ENCODE measurements at regions of chr6 and their contacts with region 1.

Region 1: GRCh38 chr6:144095331-144096002 is at the start of gene SF3B5:
- DNase-seq: peak; percentile 99
- H3K4me3 Mint-ChIP-seq: peak within 1 kb of the TSS; percentile 93
- H3K27ac Mint-ChIP-seq: peak within 1 kb of the TSS; percentile 96
- H3K4me1 Mint-ChIP-seq: peaks cover 25% of the 10 kb centered on the region
- H3K27me3 Mint-ChIP-seq: no peaks in the 10 kb centered on the region
- total RNA-seq, gene SF3B5: 162 to 171 TPM

Region 2: DNA sequence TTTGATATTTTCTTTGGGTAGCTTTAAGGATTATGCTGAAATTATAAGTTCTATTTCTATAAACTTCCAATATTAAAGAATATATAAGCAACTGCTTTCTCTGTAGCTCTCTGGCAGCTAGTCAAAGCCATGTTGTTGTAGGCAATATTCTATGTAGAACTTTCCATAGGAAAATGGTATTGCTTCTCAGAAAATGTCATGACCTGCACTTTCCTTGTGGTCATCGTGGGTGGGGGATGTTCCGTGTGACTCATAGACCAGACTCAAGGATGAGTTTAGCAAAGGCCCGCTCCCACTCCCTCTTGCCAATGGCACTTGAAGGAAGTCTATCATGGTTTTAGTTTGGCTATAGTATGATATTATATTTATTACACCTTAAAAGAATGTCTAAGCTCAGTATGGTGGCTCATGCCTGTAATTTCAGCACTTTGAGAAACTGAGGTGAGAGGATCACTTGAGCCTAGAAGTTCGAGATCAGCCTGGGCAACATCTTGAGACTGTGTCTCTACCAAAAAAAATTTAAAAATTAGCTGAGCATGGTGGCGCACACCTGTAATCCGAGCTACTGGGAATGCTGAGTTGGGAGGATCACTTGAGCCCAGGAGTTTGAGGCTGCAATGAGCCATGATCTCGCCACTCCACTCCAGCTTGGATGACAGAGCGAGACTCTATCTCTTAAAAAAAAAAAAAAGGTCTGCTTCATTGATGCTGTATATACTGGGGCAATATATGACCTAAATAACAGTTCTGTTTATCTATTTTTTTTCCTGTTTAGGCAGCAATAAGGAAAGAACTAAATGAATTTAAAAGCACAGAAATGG is 289.0 kb before region 1 on chr6:
- CTCF ChIA-PET with region 1: no interaction called
- POLR2A ChIA-PET with region 1: no interaction called
- intact Hi-C with region 1: no loop called
- DNase-seq: peak; percentile 93
- H3K4me3 Mint-ChIP-seq: peak overlapping the region; percentile 23
- H3K27ac Mint-ChIP-seq: peak overlapping the region; percentile 80
- H3K4me1 Mint-ChIP-seq: peaks cover 49% of the 10 kb centered on the region
- H3K27me3 Mint-ChIP-seq: no peaks in the 10 kb centered on the region

Region 3: GRCh38 chr6:143842902-143843676 is 252.4 kb before region 1 on chr6 and contains the start of gene LTV1:
- CTCF ChIA-PET with region 1: no interaction called
- POLR2A ChIA-PET with region 1: interaction called, 5 read pairs
- intact Hi-C with region 1: loop called (anchors 1 kb)
- DNase-seq: peak; percentile 96
- H3K4me3 Mint-ChIP-seq: peak within 1 kb of the TSS; percentile 93
- H3K27ac Mint-ChIP-seq: peak within 1 kb of the TSS; percentile 93
- H3K4me1 Mint-ChIP-seq: peaks cover 25% of the 10 kb centered on the region
- H3K27me3 Mint-ChIP-seq: no peaks in the 10 kb centered on the region
- total RNA-seq, gene LTV1: 33.5 to 35.4 TPM

Region 4: GRCh38 chr6:144055121-144055931 is 40.1 kb before region 1 on chr6:
- CTCF ChIA-PET with region 1: no interaction called
- POLR2A ChIA-PET with region 1: interaction called, 11 read pairs
- intact Hi-C with region 1: loop called (anchors 1 kb)
- DNase-seq: peak; percentile 68
- H3K4me3 Mint-ChIP-seq: peak overlapping the region; percentile 69
- H3K27ac Mint-ChIP-seq: peak overlapping the region; percentile 90
- H3K4me1 Mint-ChIP-seq: peaks cover 27% of the 10 kb centered on the region
- H3K27me3 Mint-ChIP-seq: no peaks in the 10 kb centered on the region

Region 5: DNA sequence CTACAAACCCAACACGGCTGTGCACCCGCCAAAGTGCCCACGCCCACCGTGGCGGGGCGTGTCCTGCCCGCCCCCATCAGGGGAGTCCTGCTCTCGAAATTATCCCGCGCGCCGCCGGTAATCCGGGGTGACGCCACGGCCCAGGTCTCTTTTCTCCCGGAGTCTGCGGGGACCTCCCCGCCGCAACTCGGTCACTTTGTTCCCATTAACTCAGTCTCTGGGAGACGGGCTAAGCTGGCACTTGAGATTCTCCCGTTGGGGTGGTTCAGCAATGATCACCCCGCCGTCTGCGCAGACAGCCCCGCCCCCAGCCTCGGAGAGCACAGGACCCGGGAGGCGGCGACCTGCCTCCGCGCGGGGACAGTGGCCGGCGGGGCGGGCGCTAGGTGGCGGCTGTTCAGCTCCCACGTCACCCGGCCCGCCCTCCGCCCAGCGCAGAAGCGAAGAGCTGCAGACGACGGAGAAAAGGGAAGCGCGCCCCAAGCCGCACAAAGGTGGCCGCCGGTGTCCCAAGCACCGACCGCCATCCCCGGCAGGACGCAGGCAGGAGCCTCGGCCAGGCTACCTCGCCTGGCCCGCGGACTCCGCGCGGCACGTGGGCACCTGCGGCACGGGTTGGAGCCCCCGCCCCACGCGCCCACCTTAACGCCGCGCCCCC is 31.6 kb before region 1 on chr6:
- CTCF ChIA-PET with region 1: interaction called, 3 read pairs
- POLR2A ChIA-PET with region 1: interaction called, 14 read pairs
- intact Hi-C with region 1: loop called (anchors 1 kb)
- DNase-seq: peak; percentile 91
- H3K4me3 Mint-ChIP-seq: peak overlapping the region; percentile 82
- H3K27ac Mint-ChIP-seq: peak overlapping the region; percentile 67
- H3K4me1 Mint-ChIP-seq: peaks cover 43% of the 10 kb centered on the region
- H3K27me3 Mint-ChIP-seq: no peaks in the 10 kb centered on the region

Region 6: DNA sequence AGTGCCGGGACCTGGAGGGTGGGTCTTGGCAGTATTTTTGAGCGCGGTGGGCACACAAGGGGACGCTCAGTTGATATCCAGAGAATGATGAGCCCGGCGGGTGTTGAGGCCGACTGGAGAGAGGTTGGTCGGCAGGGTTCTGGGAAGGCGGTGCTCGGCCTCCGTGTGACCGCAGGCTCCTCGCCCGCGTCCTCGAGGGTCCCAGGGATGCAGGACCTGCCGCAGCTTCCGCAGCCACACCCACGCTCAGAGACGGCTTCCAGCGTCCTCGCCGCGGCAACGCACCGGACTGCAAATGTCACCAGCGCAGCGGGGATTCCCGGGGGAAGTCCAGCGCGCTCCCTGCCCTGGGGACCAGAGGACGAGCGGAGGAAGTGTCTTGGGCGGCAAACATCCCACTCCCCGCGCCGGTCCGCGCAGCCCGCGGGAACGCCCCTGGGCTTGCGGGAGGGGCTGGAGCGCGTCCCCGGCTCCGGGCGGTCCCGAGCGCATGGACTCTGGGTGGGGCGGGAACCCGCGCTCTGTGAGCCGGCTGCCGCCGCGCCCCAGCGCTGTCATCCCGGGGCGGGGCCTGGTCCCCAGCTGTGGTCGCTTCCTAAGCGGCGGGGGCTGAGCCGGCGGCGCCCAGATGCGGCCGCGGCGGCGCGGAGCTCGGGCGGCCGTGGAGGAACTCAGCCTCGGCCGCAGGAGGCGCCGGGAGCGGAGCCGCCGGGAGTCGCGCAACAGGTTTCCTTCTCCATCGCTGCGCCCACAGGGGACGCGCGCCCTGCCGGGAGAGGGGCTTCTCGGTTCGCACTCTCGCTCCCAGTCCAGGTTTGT is 54.6 kb after region 1 on chr6 and contains the start of gene STX11:
- CTCF ChIA-PET with region 1: no interaction called
- POLR2A ChIA-PET with region 1: no interaction called
- intact Hi-C with region 1: loop called (anchors 1 kb)
- DNase-seq: peak; percentile 88
- H3K4me3 Mint-ChIP-seq: peak within 1 kb of the TSS; percentile 88
- H3K27ac Mint-ChIP-seq: peak within 1 kb of the TSS; percentile 98
- H3K4me1 Mint-ChIP-seq: peaks cover 41% of the 10 kb centered on the region
- H3K27me3 Mint-ChIP-seq: no peaks in the 10 kb centered on the region
- total RNA-seq, gene STX11: 16.0 to 16.6 TPM

Region 7: DNA sequence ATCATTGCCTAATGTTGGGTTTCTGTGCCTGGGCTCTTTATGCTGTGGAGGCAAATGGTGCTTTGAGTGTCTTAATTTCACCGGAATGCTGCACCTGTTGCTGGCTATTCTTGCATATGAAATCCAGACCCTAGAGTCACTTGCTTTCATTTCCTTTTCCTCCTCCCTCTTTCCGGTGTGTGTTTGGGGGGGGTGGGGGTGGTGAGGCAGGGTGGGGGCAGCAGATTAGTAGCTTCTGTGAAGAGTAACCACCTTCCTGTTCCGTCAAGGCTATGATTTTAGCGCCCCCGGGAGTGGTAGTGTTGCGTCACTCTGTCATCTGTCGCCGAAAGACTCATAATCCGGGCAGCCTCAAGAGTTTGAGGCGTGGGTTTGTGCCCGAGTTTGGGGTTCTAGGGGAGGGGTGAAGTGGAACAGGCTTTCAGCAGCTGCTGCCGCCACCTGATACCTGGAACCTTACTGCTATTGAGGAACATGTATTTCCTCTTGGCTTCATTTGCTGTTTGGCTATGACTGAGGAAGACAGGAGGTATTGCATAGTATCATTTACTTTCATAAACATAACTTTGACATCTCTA is 238.8 kb after region 1 on chr6:
- CTCF ChIA-PET with region 1: no interaction called
- POLR2A ChIA-PET with region 1: no interaction called
- intact Hi-C with region 1: loop called (anchors 2 kb)
- DNase-seq: peak; percentile 84
- H3K4me3 Mint-ChIP-seq: peak overlapping the region; percentile 67
- H3K27ac Mint-ChIP-seq: peak overlapping the region; percentile 67
- H3K4me1 Mint-ChIP-seq: peaks cover 40% of the 10 kb centered on the region
- H3K27me3 Mint-ChIP-seq: no peaks in the 10 kb centered on the region

Region 8: GRCh38 chr6:144469144-144469575 is 373.7 kb after region 1 on chr6:
- CTCF ChIA-PET with region 1: no interaction called
- POLR2A ChIA-PET with region 1: no interaction called
- intact Hi-C with region 1: loop called (anchors 5 kb)
- DNase-seq: peak; percentile 46
- H3K4me3 Mint-ChIP-seq: peak overlapping the region; percentile 59
- H3K27ac Mint-ChIP-seq: peak overlapping the region; percentile 49
- H3K4me1 Mint-ChIP-seq: peaks cover 31% of the 10 kb centered on the region
- H3K27me3 Mint-ChIP-seq: no peaks in the 10 kb centered on the region